Psoas muscle (tissue), 8 donors: ENCODE measurements at regions of chr16 and their contacts with region 1.

Region 1: GRCh38 chr16:23742766-23743165 is 12.1 kb upstream of the CHP2 start:
- DNase-seq: no peak
- ATAC-seq: no peak
- H3K4me3 ChIP-seq: no peak overlapping the region
- H3K27ac ChIP-seq: no peak overlapping the region
- H3K4me1 ChIP-seq: no peaks in the 10 kb centered on the region
- H3K27me3 ChIP-seq: peaks cover 0 to 1% (median 0%) of the 10 kb centered on the region in 3 donors
- CTCF ChIP-seq: no peak

Region 2: DNA sequence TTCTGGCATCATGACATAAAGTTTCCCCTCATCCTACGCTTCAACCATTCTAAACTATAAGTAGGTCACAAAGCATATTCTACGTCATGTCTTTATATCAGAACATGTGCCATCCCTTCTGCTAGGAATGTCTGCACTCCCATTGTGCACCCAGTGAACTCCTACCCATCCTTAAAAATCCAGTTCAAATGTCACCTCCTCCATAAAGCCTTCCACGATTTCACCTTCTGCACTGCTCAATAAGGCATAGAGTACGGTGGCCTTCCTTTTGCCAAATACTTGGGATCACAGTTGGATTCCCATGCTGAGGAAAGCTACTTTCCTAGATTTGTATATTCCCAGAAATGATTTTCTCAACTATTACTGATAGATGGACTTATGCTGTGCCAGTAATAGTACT is 1701.2 kb after region 1 on chr16:
- intact Hi-C with region 1: loop called in 1 of 2 experiments (anchors 10 kb)
- DNase-seq: no peak
- ATAC-seq: no peak
- H3K4me3 ChIP-seq: no peak overlapping the region
- H3K27ac ChIP-seq: no peak overlapping the region
- H3K4me1 ChIP-seq: no peaks in the 10 kb centered on the region
- H3K27me3 ChIP-seq: no peaks in the 10 kb centered on the region
- CTCF ChIP-seq: no peak